HepG2 (cell line): ENCODE measurements at regions of chr12 and their contacts with region 1.

Region 1: GRCh38 chr12:65631621-65632111 is 192.6 kb upstream of the HMGA2 start:
- DNase-seq: peak; percentile 91
- ATAC-seq: peak; percentile 89
- H3K4me3 ChIP-seq: peak overlapping the region in 1 of 3 experiments; percentile 15; a peak in 1 of 6 replicates
- H3K27ac ChIP-seq: no peak overlapping the region
- H3K4me1 ChIP-seq: peaks cover 43% of the 10 kb centered on the region
- H3K27me3 ChIP-seq: no peaks in the 10 kb centered on the region
- CTCF ChIP-seq: no peak
- EP300 ChIP-seq: peak in 1 of 2 experiments; percentile 56; a peak in 1 of 4 replicates
- POLR2A ChIP-seq: no peak
- RAD21 ChIP-seq: no peak

Region 2: GRCh38 chr12:65269603-65270002 is 362.1 kb before region 1 on chr12:
- CTCF ChIA-PET with region 1: no interaction called
- POLR2A ChIA-PET with region 1: no interaction called
- in situ Hi-C with region 1: no loop called
- intact Hi-C with region 1: no loop called
- DNase-seq: no peak
- ATAC-seq: no peak
- H3K4me3 ChIP-seq: no peak overlapping the region
- H3K27ac ChIP-seq: no peak overlapping the region
- H3K4me1 ChIP-seq: no peaks in the 10 kb centered on the region
- H3K27me3 ChIP-seq: no peaks in the 10 kb centered on the region
- CTCF ChIP-seq: no peak
- EP300 ChIP-seq: no peak
- POLR2A ChIP-seq: no peak
- RAD21 ChIP-seq: no peak

Region 3: DNA sequence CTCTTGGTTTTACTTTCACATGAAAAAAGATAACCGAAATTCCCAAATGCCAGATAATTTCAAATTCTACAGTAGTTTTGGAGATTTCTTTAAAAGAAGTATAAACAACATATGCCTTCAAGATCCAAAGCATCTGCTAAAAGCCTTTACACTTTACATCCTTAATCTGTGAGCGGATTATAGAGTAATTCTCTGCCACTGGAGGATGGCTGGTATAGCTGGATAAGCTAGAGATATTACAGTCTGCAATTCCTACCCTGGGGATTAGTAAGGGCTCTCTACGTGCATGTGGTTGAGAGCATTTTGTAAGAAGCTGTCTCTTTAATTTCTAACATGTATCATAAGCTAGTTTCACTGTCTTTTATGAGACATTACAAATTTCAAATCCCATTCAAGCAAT is 47.6 kb before region 1 on chr12:
- CTCF ChIA-PET with region 1: no interaction called
- POLR2A ChIA-PET with region 1: no interaction called
- in situ Hi-C with region 1: no loop called
- intact Hi-C with region 1: loop called (anchors 2 kb)
- DNase-seq: no peak
- ATAC-seq: no peak
- H3K4me3 ChIP-seq: no peak overlapping the region
- H3K27ac ChIP-seq: no peak overlapping the region
- H3K4me1 ChIP-seq: no peaks in the 10 kb centered on the region
- H3K27me3 ChIP-seq: no peaks in the 10 kb centered on the region
- CTCF ChIP-seq: no peak
- EP300 ChIP-seq: no peak
- POLR2A ChIP-seq: no peak
- RAD21 ChIP-seq: no peak

Region 4: DNA sequence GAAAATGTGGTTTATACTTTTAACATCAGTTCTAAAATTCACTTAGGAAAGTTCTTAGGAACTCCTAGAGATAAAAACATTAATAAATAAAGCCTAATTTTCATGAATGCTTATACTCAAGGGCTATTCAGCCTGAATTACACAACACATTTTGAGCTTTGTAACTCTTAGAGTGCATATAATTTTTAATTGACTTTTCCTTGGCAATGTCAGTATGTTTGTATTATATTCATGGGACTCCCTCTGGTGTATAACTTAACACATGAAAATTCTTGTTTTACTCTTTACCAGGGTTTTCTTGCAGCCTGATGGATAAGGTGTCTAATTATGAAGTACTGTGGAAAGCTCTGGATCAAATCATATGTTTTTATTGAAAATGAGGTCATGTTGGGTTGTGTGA is 42.1 kb after region 1 on chr12:
- CTCF ChIA-PET with region 1: no interaction called
- POLR2A ChIA-PET with region 1: no interaction called
- in situ Hi-C with region 1: no loop called
- intact Hi-C with region 1: loop called (anchors 2 kb)
- DNase-seq: no peak
- ATAC-seq: no peak
- H3K4me3 ChIP-seq: no peak overlapping the region
- H3K27ac ChIP-seq: no peak overlapping the region
- H3K4me1 ChIP-seq: no peaks in the 10 kb centered on the region
- H3K27me3 ChIP-seq: no peaks in the 10 kb centered on the region; a peak in 1 of 5 replicates
- CTCF ChIP-seq: no peak
- EP300 ChIP-seq: no peak
- POLR2A ChIP-seq: no peak
- RAD21 ChIP-seq: no peak